CD14-positive monocyte (primary cell): ENCODE measurements at regions of chr12 and their contacts with region 1.

Region 1: DNA sequence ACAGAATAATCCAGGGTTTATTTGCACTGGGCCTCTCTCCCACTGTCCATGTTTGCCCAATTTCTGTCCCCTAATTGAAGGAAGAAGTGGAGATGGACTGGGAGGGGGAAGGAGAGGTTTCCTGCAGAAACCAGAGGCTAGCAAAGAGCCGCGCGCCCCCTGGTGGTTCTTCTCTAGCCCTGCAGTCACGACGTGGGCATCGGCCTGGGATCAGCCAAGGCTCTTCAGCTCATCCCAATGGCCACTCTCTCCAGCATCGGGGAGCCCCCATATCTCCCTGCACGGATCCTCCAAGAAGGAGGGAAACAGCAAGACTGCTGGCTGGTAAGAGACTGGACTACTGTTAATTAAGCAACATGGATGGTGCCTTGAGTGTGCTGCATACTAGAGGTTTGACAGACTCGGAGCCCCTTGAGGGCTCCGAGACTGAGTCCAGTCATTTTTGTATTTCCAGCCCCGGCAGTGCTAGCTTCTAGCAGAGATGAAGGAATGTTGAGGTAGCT is 18.7 kb downstream of the ZBTB39 start:
- DNase-seq: peak; percentile 58 to 81 (median 75)
- H3K4me3 ChIP-seq: no peak overlapping the region
- H3K4me3 Mint-ChIP-seq: peak overlapping the region; percentile 39 to 57
- H3K27ac ChIP-seq: no peak overlapping the region
- H3K27ac Mint-ChIP-seq: no peak overlapping the region
- H3K4me1 ChIP-seq: peaks cover 26 to 32% of the 10 kb centered on the region in 2 donors
- H3K4me1 Mint-ChIP-seq: peaks cover 33% of the 10 kb centered on the region
- H3K27me3 ChIP-seq: no peaks in the 10 kb centered on the region
- H3K27me3 Mint-ChIP-seq: peaks cover 4 to 6% (median 4%) of the 10 kb centered on the region in 3 donors
- CTCF ChIP-seq: peak; percentile 91

Region 2: GRCh38 chr12:56759263-56759908 is 228.2 kb before region 1 on chr12:
- intact Hi-C with region 1: loop called (anchors 2 to 5 kb)
- DNase-seq: no peak
- H3K4me3 ChIP-seq: no peak overlapping the region
- H3K4me3 Mint-ChIP-seq: no peak overlapping the region
- H3K27ac ChIP-seq: no peak overlapping the region
- H3K27ac Mint-ChIP-seq: no peak overlapping the region
- H3K4me1 ChIP-seq: peaks cover 0 to 2% of the 10 kb centered on the region in 2 donors
- H3K4me1 Mint-ChIP-seq: peaks cover 7% of the 10 kb centered on the region
- H3K27me3 ChIP-seq: no peaks in the 10 kb centered on the region
- H3K27me3 Mint-ChIP-seq: peaks cover 0 to 5% (median 4%) of the 10 kb centered on the region in 3 donors
- CTCF ChIP-seq: no peak